A673 (cell line): ENCODE measurements at regions of chr4 and their contacts with region 1.

Region 1: GRCh38 chr4:27176400-27176799 is 315.8 kb downstream of the STIM2 start:
- DNase-seq: peak; percentile 84
- H3K4me3 ChIP-seq: no peak overlapping the region
- H3K27ac ChIP-seq: peak overlapping the region; percentile 53
- H3K4me1 ChIP-seq: peaks cover 25% of the 10 kb centered on the region
- H3K27me3 ChIP-seq: no peaks in the 10 kb centered on the region
- CTCF ChIP-seq: peak; percentile 75

Region 2: GRCh38 chr4:27048429-27049238 is 127.8 kb before region 1 on chr4:
- CTCF ChIA-PET with region 1: interaction called, 3 read pairs
- POLR2A ChIA-PET with region 1: no interaction called
- intact Hi-C with region 1: loop called (anchors 10 kb)
- DNase-seq: peak; percentile 60
- H3K4me3 ChIP-seq: peak overlapping the region; percentile 36
- H3K27ac ChIP-seq: no peak overlapping the region
- H3K4me1 ChIP-seq: no peaks in the 10 kb centered on the region
- H3K27me3 ChIP-seq: no peaks in the 10 kb centered on the region
- CTCF ChIP-seq: peak; percentile 77

Region 3: DNA sequence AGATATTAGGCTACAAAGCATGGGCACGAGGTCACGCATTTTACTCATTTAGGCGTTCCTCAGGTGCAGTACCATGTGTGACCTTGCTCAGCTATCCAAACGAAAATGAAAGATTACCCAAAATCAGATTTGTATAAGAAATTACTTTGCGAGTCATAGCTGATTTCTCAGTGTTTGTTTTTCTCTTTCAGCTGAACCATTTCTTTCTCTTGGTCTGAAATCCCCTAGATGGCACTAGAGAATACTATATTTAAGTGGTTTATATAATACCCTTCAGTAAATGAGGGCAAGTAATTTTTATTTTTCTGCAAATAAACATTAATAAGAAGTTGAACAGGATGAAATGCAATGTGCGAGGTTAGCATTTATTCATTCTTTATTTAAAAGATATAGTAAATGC is 180.9 kb after region 1 on chr4:
- CTCF ChIA-PET with region 1: no interaction called
- POLR2A ChIA-PET with region 1: no interaction called
- intact Hi-C with region 1: no loop called
- DNase-seq: peak; percentile 14
- H3K4me3 ChIP-seq: no peak overlapping the region
- H3K27ac ChIP-seq: no peak overlapping the region
- H3K4me1 ChIP-seq: no peaks in the 10 kb centered on the region
- H3K27me3 ChIP-seq: no peaks in the 10 kb centered on the region
- CTCF ChIP-seq: peak; percentile 55; the same call in 1 of the 2 replicates

Region 4: GRCh38 chr4:27666943-27667342 is 490.5 kb after region 1 on chr4:
- CTCF ChIA-PET with region 1: no interaction called
- POLR2A ChIA-PET with region 1: no interaction called
- intact Hi-C with region 1: loop called (anchors 5 kb)
- DNase-seq: peak; percentile 63
- H3K4me3 ChIP-seq: no peak overlapping the region
- H3K27ac ChIP-seq: no peak overlapping the region
- H3K4me1 ChIP-seq: no peaks in the 10 kb centered on the region
- H3K27me3 ChIP-seq: no peaks in the 10 kb centered on the region
- CTCF ChIP-seq: peak; percentile 52